HEK293T (cell line): ENCODE measurements at regions of chr1 and their contacts with region 1.

Region 1: GRCh38 chr1:63691701-63692425 is 82.0 kb upstream of the ROR1 start:
- DNase-seq: peak; percentile 84

Region 2: DNA sequence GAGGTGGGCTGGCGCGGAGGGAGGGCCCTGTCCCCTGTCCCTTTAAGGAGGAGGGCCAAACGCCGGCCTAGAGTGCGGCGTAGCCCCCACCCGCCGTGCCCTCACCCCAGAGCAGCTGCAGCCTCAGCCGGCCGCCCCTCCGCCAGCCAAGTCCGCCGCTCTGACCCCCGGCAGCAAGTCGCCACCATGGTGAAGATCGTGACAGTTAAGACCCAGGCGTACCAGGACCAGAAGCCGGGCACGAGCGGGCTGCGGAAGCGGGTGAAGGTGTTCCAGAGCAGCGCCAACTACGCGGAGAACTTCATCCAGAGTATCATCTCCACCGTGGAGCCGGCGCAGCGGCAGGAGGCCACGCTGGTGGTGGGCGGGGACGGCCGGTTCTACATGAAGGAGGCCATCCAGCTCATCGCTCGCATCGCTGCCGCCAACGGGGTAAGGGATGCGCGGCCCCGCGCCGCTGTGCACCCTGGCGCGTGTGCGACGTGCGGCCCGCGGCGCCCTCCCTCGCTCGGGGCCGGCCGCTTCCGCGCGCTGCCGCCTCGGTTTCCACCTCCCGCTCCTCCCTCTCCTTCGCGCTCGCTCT is 98.5 kb before region 1 on chr1 and contains the start of gene PGM1:
- CTCF ChIA-PET with region 1: no interaction called
- POLR2A ChIA-PET with region 1: no interaction called
- DNase-seq: peak; percentile 85

Region 3: GRCh38 chr1:63717511-63718065 is 25.7 kb after region 1 on chr1:
- CTCF ChIA-PET with region 1: no interaction called
- POLR2A ChIA-PET with region 1: no interaction called
- DNase-seq: no peak

Region 4: DNA sequence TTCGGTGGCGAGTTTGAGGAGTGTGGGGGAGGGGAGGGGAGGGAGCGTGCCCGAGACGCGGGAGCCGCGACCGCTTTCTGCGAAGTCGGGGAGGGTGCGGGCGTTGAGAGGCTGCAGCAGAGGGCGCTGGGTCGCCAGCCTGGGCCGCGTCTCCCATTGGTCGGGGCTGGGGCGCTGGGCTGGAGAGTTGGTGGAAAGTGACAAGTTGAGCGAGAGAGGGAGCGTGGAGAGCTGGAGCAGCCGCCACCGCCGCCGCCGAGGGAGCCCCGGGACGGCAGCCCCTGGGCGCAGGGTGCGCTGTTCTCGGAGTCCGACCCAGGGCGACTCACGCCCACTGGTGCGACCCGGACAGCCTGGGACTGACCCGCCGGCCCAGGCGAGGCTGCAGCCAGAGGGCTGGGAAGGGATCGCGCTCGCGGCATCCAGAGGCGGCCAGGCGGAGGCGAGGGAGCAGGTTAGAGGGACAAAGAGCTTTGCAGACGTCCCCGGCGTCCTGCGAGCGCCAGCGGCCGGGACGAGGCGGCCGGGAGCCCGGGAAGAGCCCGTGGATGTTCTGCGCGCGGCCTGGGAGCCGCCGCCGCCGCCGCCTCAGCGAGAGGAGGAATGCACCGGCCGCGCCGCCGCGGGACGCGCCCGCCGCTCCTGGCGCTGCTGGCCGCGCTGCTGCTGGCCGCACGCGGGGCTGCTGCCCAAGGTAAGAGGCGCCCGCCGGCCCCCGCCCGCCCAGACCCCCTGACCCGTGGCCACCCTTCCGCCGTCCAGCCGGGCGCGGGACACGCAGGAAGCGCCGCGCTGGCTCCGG is 82.2 kb after region 1 on chr1 and contains the start of gene ROR1:
- CTCF ChIA-PET with region 1: interaction called, 18 read pairs
- POLR2A ChIA-PET with region 1: interaction called, 3 read pairs
- DNase-seq: peak; percentile 95

Region 5: DNA sequence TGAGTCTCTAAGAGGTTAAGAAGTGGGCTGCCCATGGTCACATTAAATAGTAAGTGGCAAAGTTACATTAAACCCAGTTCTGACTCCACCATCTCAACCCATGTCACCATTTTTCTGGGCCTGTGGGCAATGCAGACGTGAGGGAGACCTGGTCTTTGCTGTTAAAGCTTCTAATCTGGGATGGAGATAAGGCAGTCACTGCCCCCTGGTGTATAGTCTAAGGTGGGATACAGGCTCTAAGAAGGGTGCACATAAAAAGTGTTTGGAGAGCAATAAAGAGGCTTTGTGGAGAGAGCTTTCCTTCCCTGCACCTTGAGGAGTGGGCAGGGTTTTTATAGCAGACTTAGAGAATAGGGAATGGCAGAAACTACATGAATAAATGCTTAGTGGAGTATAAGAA is 223.3 kb after region 1 on chr1:
- CTCF ChIA-PET with region 1: interaction called, 20 read pairs
- POLR2A ChIA-PET with region 1: no interaction called
- DNase-seq: no peak

Region 6: DNA sequence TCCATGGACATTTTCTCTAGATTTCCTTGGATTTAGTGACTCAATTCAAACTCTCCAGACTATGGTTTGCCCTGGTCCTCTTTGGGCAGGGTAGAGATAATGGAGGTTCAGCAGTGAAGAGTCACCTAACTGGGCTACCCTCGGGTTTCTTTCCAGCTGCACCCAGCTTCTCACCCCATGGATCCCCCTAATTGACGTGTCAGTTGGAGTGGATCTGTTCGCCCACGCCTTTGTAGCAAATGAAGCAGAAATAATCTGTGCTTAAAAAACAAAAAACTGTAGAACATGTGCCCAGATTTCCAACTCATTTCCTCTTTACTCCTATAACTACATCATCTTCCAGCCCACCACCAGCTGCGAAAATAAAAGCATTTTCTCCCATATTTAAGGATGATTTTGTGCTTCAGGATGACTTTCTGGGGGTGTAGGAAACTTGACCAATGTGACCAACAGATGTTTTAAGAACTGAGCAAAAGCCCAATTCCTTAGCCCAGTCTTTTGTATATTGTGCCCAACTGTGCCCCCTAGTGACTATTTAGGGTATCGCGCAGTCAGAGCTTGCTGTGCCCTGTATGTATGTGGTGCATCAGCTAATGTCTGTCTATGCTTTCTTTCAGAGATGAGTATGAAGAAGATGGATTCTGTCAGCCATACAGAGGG is 445.0 kb after region 1 on chr1:
- CTCF ChIA-PET with region 1: interaction called, 15 read pairs
- POLR2A ChIA-PET with region 1: no interaction called
- DNase-seq: peak; percentile 79